ENCODE measurements at regions of chr2 and their contacts with region 1.

Region 1: DNA sequence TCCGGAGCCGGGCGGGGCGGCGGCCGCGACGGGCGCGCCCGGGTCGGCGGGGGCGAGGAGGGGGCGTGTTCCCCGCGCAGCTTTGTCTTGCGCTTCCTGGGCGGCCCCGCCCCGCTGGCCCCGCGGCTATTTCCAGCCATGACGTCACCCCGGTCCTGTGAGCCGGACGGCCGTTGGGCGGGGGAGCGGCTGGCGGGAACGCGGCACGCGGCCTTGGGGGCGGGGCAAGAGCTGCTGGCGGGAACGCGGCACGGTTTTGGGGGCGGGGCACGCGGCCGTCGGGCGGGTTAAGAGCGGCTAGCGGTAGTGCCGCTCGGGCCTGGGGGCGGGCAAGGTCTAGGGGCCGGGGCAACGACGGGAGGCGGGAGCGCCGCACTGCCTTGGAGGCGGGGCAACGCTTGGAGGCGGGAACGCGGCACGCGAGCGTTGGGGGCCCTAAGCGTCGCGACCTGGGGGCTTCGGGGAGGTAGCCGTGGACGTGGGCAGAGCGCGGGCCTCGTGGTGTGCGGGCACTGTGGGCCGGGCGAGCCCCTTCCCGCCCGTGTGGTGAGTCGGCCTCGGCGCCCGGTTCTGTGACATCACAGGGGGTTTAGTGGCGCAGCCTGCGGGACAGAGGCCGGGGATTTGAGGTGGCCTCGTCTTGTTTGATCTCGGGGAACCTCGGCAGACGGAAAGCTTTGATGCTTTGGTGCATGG is 704 bp downstream of the KLF11 start:
- DNase-seq: peak; percentile 84 to 94
- H3K4me3 ChIP-seq: peak overlapping the region; percentile 59; the same call in 1 of the 2 replicates
- H3K27ac ChIP-seq: peak overlapping the region; percentile 70
- H3K4me1 ChIP-seq: peaks cover 5% of the 10 kb centered on the region
- H3K27me3 ChIP-seq: no peaks in the 10 kb centered on the region
- CTCF ChIP-seq: no peak

Region 2: DNA sequence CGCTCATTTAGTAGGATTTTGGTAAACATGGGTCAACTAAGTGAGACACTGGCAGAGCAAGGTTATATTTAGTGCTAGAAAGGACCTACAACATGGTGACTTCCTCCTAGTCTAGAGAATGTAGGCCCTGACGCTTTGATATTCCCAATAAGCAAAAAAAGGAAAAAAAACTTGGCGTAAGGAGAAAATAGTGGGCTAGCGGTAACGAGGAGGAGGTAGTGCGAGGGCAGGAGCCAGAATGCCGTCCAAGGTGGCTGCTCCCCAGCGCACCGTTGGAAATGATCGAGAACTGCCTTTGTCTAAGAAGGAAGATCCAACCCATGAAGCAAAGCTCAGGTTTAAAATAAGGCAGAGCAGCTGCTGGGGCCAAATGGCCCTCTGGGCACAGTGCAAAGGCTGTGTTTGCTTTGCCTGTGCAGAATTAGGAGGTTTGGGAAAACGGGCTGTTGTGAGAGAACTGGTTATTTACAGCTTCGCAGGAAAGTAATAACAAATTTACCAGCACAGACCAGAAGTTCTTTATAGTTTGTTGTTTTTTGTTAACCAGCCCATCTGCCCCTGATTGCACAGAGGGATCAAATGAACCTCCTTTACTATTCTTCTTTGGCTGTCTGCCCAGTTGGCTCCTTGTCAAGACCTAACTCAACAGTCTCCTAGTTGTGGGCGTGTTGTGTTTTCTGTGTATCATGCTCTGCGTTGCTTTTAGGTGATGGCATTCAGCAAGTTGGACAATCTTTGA is 707.3 kb before region 1 on chr2:
- CTCF ChIA-PET with region 1: no interaction called
- POLR2A ChIA-PET with region 1: no interaction called
- intact Hi-C with region 1: no loop called
- DNase-seq: peak; percentile 78 to 82
- H3K4me3 ChIP-seq: no peak overlapping the region
- H3K27ac ChIP-seq: peak overlapping the region; percentile 33
- H3K4me1 ChIP-seq: peaks cover 76% of the 10 kb centered on the region
- H3K27me3 ChIP-seq: no peaks in the 10 kb centered on the region
- CTCF ChIP-seq: no peak

Region 3: GRCh38 chr2:9941196-9941995 is 102.7 kb before region 1 on chr2:
- CTCF ChIA-PET with region 1: no interaction called
- POLR2A ChIA-PET with region 1: interaction called, 9 read pairs
- intact Hi-C with region 1: loop called (anchors 1 kb)
- DNase-seq: peak; percentile 80 to 96
- H3K4me3 ChIP-seq: peak overlapping the region; percentile 40; the same call in 1 of the 2 replicates
- H3K27ac ChIP-seq: peak overlapping the region; percentile 97
- H3K4me1 ChIP-seq: peaks cover 74% of the 10 kb centered on the region
- H3K27me3 ChIP-seq: no peaks in the 10 kb centered on the region
- CTCF ChIP-seq: no peak

Measured in PC-9 (cell line).